ENCODE measurements at regions of chr9 and their contacts with region 1.

Region 1: DNA sequence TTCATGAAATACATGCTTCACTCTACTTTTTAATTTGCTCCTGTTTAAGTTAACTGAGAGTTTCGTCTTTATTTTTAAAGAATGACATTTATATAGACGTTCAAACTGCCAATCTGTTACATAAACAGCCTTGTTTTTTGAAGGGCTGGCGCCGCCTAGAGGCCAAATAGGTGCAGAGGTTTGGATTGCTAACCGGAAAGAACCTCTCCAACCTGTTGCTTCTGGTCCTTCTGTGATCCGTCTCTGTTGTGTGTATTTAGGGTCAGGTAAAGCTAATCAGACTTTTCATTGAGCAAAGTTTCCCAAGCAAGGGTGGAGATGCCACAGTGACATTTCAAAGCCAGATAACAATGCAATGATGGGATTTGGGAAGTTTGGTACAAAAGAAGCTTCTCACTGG is 39.5 kb upstream of the GLIS3 start:
- DNase-seq: peak; percentile 61 to 88 (median 80)
- ATAC-seq: peak; percentile 92
- H3K4me3 ChIP-seq: no peak overlapping the region
- H3K4me3 Mint-ChIP-seq: peak overlapping the region; percentile 17
- H3K27ac ChIP-seq: no peak overlapping the region
- H3K27ac Mint-ChIP-seq: peak overlapping the region; percentile 50
- H3K4me1 ChIP-seq: peaks cover 3% of the 10 kb centered on the region
- H3K4me1 Mint-ChIP-seq: peaks cover 11% of the 10 kb centered on the region
- H3K27me3 ChIP-seq: no peaks in the 10 kb centered on the region
- H3K27me3 Mint-ChIP-seq: no peaks in the 10 kb centered on the region
- CTCF ChIP-seq: peak; percentile 70

Region 2: DNA sequence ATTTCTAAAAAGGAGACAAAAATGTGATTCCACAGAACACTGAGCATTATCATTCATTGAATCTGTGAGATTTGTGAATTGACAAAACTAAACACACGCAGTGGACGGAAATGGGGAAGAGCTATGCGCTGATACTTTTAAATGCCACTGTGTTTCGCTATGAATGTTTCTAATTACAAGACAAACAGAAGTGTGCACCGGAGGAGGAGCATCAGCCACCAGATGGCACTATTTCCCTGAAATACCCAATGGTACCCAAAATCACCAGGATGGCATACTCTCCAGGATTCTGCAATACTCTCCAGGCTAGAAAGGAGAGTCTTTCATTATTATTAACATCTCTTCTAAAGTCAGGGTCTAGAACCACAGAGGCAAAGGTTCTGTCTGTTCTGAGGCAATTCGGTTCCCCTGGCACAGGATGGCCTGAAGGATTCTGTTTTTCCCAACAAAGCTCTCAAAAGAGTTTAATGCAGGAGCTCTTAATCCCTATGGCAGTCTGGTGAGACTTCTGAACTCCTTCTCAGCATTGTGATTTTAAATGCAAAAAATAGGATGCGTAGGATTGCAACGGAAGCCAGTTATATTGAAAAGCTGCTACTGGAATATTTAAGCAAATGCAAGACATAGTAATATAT is 1481.7 kb before region 1 on chr9:
- CTCF ChIA-PET with region 1: interaction called, 5 read pairs
- POLR2A ChIA-PET with region 1: no interaction called
- intact Hi-C with region 1: loop called in 1 of 2 experiments (anchors 2 kb)
- DNase-seq: peak; percentile 28 to 75 (median 60)
- ATAC-seq: peak; percentile 62
- H3K4me3 ChIP-seq: no peak overlapping the region
- H3K4me3 Mint-ChIP-seq: no peak overlapping the region
- H3K27ac ChIP-seq: no peak overlapping the region
- H3K27ac Mint-ChIP-seq: no peak overlapping the region
- H3K4me1 ChIP-seq: no peaks in the 10 kb centered on the region
- H3K4me1 Mint-ChIP-seq: peaks cover 3% of the 10 kb centered on the region
- H3K27me3 ChIP-seq: peaks cover 0 to 3% of the 10 kb centered on the region in 2 experiments
- H3K27me3 Mint-ChIP-seq: peaks cover 40% of the 10 kb centered on the region
- CTCF ChIP-seq: peak; percentile 88

Region 3: GRCh38 chr9:3467593-3468219 is 871.7 kb before region 1 on chr9:
- CTCF ChIA-PET with region 1: no interaction called
- POLR2A ChIA-PET with region 1: no interaction called
- intact Hi-C with region 1: loop called (anchors 1 to 10 kb)
- DNase-seq: peak; percentile 13 to 80 (median 62)
- ATAC-seq: peak; percentile 99
- H3K4me3 ChIP-seq: no peak overlapping the region
- H3K4me3 Mint-ChIP-seq: no peak overlapping the region
- H3K27ac ChIP-seq: no peak overlapping the region
- H3K27ac Mint-ChIP-seq: no peak overlapping the region
- H3K4me1 ChIP-seq: peaks cover 4% of the 10 kb centered on the region
- H3K4me1 Mint-ChIP-seq: peaks cover 10% of the 10 kb centered on the region
- H3K27me3 ChIP-seq: no peaks in the 10 kb centered on the region
- H3K27me3 Mint-ChIP-seq: no peaks in the 10 kb centered on the region
- CTCF ChIP-seq: peak; percentile 87

Region 4: GRCh38 chr9:4297151-4297785 is 42.1 kb before region 1 on chr9:
- CTCF ChIA-PET with region 1: interaction called, 6 read pairs
- POLR2A ChIA-PET with region 1: no interaction called
- intact Hi-C with region 1: loop called in 1 of 2 experiments (anchors 1 kb)
- DNase-seq: peak in 6 of 9 experiments; percentile 27 to 68 (median 33)
- ATAC-seq: peak; percentile 18
- H3K4me3 ChIP-seq: peak overlapping the region; percentile 67 to 81
- H3K4me3 Mint-ChIP-seq: peak overlapping the region; percentile 97
- H3K27ac ChIP-seq: peak overlapping the region in 1 of 2 experiments; percentile 73
- H3K27ac Mint-ChIP-seq: peak overlapping the region; percentile 87
- H3K4me1 ChIP-seq: peaks cover 12% of the 10 kb centered on the region
- H3K4me1 Mint-ChIP-seq: peaks cover 21% of the 10 kb centered on the region
- H3K27me3 ChIP-seq: peaks cover 0 to 12% of the 10 kb centered on the region in 2 experiments
- H3K27me3 Mint-ChIP-seq: peaks cover 43% of the 10 kb centered on the region
- CTCF ChIP-seq: no peak

Region 5: GRCh38 chr9:4327504-4328191 is 11.7 kb before region 1 on chr9:
- CTCF ChIA-PET with region 1: interaction called, 31 read pairs
- POLR2A ChIA-PET with region 1: no interaction called
- intact Hi-C with region 1: no loop called
- DNase-seq: no peak
- ATAC-seq: no peak
- H3K4me3 ChIP-seq: no peak overlapping the region
- H3K4me3 Mint-ChIP-seq: no peak overlapping the region
- H3K27ac ChIP-seq: no peak overlapping the region
- H3K27ac Mint-ChIP-seq: no peak overlapping the region
- H3K4me1 ChIP-seq: peaks cover 44% of the 10 kb centered on the region
- H3K4me1 Mint-ChIP-seq: peaks cover 40% of the 10 kb centered on the region
- H3K27me3 ChIP-seq: no peaks in the 10 kb centered on the region
- H3K27me3 Mint-ChIP-seq: no peaks in the 10 kb centered on the region
- CTCF ChIP-seq: no peak

Measured in CD8-positive, alpha-beta T cell (primary cell).